AG04449 (cell line): ENCODE measurements at regions of chr20 and their contacts with region 1.

Region 1: GRCh38 chr20:41339507-41340326 is 904 bp upstream of the LPIN3 start:
- DNase-seq: no peak
- H3K4me3 ChIP-seq: peak overlapping the region; percentile 63
- CTCF ChIP-seq: peak; percentile 96

Region 2: GRCh38 chr20:40970201-40970600 is 369.5 kb before region 1 on chr20:
- CTCF ChIA-PET with region 1: interaction called, 10 read pairs
- POLR2A ChIA-PET with region 1: no interaction called
- DNase-seq: no peak
- H3K4me3 ChIP-seq: no peak overlapping the region
- CTCF ChIP-seq: no peak

Region 3: GRCh38 chr20:41149679-41150131 is 190.0 kb before region 1 on chr20:
- CTCF ChIA-PET with region 1: interaction called, 35 read pairs
- POLR2A ChIA-PET with region 1: no interaction called
- DNase-seq: no peak
- H3K4me3 ChIP-seq: no peak overlapping the region
- CTCF ChIP-seq: no peak

Region 4: GRCh38 chr20:41218466-41218865 is 121.3 kb before region 1 on chr20:
- CTCF ChIA-PET with region 1: interaction called, 35 read pairs
- POLR2A ChIA-PET with region 1: no interaction called
- DNase-seq: no peak
- H3K4me3 ChIP-seq: no peak overlapping the region
- CTCF ChIP-seq: no peak

Region 5: DNA sequence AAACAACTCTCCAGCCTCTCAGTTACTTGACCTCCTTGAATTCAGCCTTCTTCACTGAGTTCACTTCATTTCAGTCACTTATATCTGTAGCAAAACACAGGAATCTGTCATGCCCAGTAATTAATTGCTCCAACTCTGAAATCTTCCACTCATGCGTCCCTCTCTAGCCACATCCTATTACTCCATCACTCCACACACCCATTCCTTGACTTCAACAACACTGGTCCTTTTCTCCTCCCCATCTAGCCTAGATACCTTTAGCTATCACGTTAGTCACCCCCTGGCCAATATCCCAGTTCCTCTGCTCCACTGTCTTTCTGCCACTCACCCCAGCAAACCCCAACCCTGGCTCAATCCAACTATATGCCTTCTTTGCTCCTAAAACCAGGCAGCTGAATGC is 29.9 kb before region 1 on chr20:
- CTCF ChIA-PET with region 1: interaction called, 13 read pairs
- POLR2A ChIA-PET with region 1: no interaction called
- DNase-seq: no peak
- H3K4me3 ChIP-seq: no peak overlapping the region
- CTCF ChIP-seq: no peak

Region 6: DNA sequence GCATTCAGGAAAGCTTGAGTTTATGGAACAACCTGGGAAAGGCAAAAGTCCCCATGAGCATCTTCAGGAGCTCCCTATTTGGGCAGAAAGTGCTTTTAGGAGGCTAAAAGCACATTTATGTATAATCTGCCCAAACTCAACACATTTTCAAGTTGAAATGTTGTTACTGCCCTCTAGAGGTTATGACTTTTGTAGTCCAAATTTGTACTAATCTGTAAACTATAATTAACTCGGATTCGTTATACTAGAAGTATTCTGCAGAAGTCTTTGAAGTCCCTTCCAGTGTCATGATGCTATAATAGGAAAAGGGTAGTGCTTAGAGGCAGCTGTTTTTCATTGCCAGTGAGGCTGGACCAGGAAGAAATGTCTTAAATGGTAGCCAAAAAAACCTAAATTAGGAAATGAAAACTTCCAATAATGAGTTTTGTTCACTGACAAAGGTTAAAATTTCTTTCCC is 71.7 kb after region 1 on chr20:
- CTCF ChIA-PET with region 1: interaction called, 16 read pairs
- POLR2A ChIA-PET with region 1: no interaction called
- DNase-seq: no peak
- H3K4me3 ChIP-seq: no peak overlapping the region
- CTCF ChIP-seq: peak; percentile 19